ENCODE measurements at regions of chr2 and their contacts with region 1.

Region 1: DNA sequence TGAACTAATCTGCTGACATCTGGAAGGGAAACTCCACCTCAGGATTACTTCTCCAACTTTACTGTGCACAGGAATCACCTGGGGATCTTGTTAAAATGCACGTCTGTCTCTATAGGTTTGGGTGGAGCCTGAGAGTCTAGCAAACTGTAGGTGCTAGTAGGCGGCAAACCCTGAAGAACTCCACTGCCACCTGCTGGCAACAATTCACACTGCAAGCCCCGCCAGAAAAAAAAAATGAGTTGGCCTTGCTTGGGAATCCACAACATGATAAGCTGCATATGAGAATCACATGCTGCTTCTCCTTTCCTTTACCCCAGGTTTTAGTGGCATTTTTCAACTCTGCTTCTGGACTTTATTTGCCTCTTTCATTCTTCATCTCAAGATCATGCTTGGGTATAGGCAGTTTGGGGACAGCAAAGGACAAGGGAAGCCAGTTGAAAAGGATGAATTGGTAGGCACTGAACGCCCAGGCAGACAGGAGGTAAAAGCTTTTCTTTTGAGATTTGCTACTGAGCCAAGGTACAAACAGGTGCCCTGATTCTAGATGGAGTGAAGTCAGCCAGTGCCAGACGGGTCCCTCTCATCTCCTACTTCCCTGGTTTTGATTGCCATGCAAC is 88.8 kb downstream of the VIT start:
- DNase-seq: peak; percentile 55
- H3K4me3 Mint-ChIP-seq: no peak overlapping the region
- H3K27ac Mint-ChIP-seq: no peak overlapping the region
- H3K4me1 Mint-ChIP-seq: peaks cover 3% of the 10 kb centered on the region
- H3K27me3 Mint-ChIP-seq: peaks cover 28% of the 10 kb centered on the region

Region 2: DNA sequence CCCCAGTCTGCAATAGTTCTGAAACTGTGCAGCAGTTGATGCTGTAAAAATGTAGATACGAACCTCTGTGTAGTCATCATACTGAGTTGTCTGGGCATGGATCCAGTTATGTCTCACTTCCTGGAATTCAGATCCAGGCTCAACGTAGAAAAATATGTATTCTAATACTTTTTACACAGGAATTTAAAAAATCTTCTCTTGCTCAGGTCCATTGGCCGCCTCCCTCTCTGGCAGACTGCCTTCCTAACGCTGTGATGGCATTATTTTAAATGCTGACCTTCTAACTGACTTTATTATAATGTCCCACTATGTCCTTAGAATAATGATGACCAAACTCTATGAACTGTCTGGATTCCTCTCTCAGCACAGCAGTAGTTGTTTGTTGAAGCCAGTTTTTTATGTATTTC is 307.0 kb before region 1 on chr2:
- intact Hi-C with region 1: no loop called
- DNase-seq: no peak
- H3K4me3 Mint-ChIP-seq: no peak overlapping the region
- H3K27ac Mint-ChIP-seq: no peak overlapping the region
- H3K4me1 Mint-ChIP-seq: no peaks in the 10 kb centered on the region
- H3K27me3 Mint-ChIP-seq: no peaks in the 10 kb centered on the region

Region 3: DNA sequence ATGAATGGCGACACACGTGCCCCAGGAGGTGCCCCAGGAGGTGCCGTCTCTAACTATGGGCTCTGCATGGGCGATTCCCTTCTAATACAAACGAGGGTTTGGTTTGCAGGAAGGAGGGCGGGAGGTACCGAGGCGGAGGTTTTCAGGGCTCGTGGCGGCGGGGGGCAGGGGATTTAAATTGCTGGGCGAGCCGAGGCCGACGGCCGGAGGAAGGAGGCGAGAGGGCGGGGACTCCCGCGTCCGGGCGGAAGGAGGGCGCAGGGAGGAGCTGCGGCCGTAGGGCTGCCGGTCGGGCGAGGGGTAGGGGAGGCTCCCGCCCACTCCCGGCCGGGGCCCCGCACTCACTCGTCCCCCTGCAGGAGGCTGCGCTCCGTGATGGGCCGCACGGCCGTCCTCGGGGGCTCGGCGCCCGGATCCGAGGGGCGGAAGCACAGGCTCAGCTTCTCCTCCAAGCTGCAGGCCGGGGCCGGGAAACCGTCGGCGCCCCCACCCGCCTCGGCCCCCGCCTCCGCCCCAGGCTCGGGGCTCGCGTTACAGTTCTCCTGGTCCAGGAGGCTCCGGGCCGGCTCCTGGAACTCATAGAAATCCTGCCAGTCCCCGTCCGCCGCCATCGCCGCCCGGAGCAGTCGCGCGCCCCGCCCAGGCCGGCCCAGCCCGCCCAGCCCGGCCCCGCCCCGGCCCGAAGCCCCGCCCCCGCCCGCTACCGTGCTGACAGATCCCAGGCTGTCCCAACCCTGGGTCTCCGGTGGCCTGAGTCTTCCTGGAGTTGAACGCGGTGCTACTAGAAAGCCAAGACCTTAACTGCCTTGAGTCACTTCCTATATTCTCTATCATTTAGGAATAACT is 187.5 kb before region 1 on chr2 and contains the start of gene FEZ2:
- intact Hi-C with region 1: loop called (anchors 5 kb)
- DNase-seq: peak; percentile 73
- H3K4me3 Mint-ChIP-seq: peak within 1 kb of the TSS; percentile 93
- H3K27ac Mint-ChIP-seq: peak within 1 kb of the TSS; percentile 89
- H3K4me1 Mint-ChIP-seq: peaks cover 29% of the 10 kb centered on the region
- H3K27me3 Mint-ChIP-seq: peaks cover 5% of the 10 kb centered on the region
- total RNA-seq, gene FEZ2: 14.0 and 14.9 TPM in 2 replicates

Region 4: GRCh38 chr2:36919066-36919837 is 134.0 kb after region 1 on chr2:
- intact Hi-C with region 1: loop called (anchors 1 kb)
- DNase-seq: no peak
- H3K4me3 Mint-ChIP-seq: no peak overlapping the region
- H3K27ac Mint-ChIP-seq: no peak overlapping the region
- H3K4me1 Mint-ChIP-seq: peaks cover 15% of the 10 kb centered on the region
- H3K27me3 Mint-ChIP-seq: no peaks in the 10 kb centered on the region

Region 5: DNA sequence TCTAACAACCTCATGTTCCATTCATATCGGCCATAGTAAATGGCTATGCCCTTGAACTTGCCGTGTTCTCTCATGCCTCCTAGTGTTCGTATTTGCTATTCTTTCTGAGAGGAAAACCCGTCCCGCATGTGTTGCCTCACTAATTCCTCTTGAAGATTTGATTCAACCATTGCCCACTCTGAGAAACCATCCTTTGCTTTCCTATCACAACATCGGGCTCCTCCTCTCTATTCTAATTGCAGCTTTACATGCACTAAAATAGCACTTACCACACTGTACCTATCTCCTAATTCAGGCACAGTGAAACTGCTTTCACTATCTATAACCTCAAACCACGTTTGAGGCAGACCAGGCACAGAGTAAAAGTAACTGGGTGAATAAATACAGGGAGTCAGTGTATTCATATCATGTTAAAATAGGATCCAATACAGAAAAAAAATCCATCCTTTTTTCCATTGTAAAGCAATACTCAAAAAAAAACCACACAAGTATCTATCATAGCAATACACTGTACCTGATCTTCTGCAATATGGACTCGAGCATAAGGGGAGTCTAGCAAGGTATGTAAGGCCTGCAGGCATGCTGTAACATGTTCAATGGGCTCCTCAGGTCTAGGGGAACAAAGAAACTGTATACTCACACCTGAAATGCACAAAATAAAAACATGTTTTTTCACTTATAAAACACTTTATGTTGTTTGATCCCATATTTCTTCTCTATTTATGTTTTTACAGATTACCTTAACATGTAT is 220.0 kb after region 1 on chr2:
- intact Hi-C with region 1: loop called (anchors 1 kb)
- DNase-seq: peak; percentile 5
- H3K4me3 Mint-ChIP-seq: peak overlapping the region; percentile 34
- H3K27ac Mint-ChIP-seq: no peak overlapping the region
- H3K4me1 Mint-ChIP-seq: peaks cover 11% of the 10 kb centered on the region
- H3K27me3 Mint-ChIP-seq: no peaks in the 10 kb centered on the region

Measured in activated T-helper 1 cell treated with anti-CD3 and anti-CD28 coated beads, Interleukin-12 subunit alpha, Interleukin-12 subunit beta, Interleukin-2, Interleukin-4 antibody, amounts not matched to agents 30 ng/mL and 10 ng/mL and 1 ng/mL, durations not matched to agents 14 hours and 24 hours and 36 hours (primary cell).